Activated naive CD4-positive, alpha-beta T cell treated with anti-CD3 and anti-CD28 coated beads for 36 hours (primary cell): ENCODE measurements at regions of chr12 and their contacts with region 1.

Region 1: DNA sequence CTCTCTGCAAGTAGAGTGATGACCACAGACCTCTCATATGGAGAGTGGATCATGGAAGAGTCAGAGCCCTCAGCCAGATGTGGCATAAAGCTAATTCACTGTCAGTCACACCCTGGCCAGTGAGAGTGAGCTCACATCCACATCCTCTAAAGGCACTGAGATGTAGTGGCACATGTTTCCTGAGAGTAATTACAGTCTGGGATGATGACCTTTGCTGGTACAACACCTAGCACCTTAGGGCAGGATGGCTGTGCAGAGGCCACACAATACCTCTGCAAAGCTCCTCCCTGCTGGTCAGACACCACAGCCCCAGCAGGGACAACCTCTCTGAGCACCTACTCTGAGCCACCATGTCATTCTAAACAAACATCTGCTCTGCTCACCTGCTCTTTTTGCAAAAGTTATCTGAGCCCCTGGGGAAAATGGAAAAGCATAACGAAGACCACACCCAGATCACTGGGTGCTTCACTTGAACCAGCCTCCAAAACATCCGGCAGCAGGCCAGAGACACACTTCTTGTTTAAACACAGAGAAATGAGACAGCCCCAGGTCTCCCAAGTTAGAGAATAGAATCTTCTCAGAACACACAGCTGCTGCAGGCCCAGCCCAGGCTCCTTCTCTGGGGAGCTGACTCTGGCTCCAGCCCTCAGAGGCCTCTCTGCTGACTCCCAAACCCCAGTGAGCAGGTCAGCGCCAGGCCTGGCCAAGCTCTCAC is 30.3 kb downstream of the PITPNM2 start:
- DNase-seq: peak; percentile 75
- H3K4me3 Mint-ChIP-seq: no peak overlapping the region
- H3K27ac Mint-ChIP-seq: peak overlapping the region; percentile 68
- H3K4me1 Mint-ChIP-seq: peaks cover 65% of the 10 kb centered on the region
- H3K27me3 Mint-ChIP-seq: no peaks in the 10 kb centered on the region

Region 2: DNA sequence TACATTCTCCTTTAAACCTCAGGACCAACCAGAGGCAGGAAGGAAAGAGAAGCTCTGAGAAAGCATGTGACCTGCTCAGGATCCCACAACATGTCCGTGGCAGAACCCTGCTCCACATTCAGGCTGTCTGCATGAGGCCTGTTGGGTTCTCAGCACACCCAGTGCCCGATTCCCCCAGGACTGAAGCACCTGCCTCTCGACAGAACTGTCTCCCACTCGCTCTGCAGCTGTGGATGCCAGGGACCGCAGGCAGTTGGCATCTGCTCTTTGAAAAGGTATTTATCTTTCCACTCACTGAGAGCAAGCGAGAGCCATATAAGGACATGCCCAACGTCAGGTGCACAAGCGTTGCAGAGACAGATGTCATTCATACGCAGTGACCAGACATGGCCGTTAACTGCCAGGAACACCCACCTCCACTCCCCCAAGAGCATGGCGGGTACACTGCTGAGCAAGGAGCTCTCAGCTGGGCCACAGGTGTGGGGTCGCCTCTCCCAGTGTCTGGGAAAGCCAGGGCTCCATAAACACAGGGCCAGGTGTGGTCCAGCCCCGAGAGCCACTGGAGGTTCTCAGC is 11.4 kb after region 1 on chr12:
- CTCF ChIA-PET with region 1: interaction called, 3 read pairs
- intact Hi-C with region 1: loop called (anchors 1 kb)
- DNase-seq: peak; percentile 74
- H3K4me3 Mint-ChIP-seq: peak overlapping the region; percentile 77
- H3K27ac Mint-ChIP-seq: peak overlapping the region; percentile 85
- H3K4me1 Mint-ChIP-seq: peaks cover 41% of the 10 kb centered on the region
- H3K27me3 Mint-ChIP-seq: no peaks in the 10 kb centered on the region